B cell (primary cell): ENCODE measurements at regions of chr16 and their contacts with region 1.

Region 1: DNA sequence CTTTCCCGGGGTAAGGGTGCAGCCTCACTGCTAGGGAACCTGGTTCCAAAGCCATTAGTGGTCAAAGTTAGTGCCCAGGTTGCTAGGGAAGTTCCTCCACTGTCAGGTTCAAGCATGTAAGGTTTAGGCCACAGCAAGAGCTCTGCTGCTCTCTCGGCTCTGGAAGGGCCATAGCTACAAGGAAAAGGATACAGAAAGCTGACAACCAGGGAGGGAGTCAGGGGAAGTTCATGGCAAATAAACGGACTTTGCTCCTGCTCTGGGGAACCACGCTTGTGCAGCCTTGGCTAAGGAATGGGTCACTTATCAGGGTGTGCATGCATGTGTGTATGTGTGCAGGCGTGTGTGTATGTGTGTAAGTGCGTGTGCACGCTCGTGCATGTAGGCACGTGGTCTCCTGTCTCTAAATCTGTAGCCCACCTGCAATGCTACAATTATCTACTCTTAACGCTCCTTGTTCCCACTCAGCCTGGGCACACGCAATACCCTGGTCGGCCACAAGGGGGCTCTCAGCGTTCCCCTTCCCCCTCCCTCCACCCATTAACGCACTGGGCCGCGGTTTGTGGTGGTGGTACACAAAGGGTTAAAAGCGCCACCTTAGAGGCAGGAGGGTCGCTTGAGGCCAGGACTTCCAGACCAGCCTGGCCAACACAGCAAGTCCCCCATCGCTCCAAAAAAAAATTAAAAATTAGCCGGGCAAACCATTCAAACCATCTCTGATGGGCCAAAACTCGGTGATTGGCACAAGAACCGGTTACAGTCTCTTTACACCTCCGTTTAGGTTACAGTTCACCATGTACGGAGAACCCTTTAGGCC is 48.4 kb upstream of the KDM8 start:
- DNase-seq: peak; percentile 75
- ATAC-seq: peak; percentile 91
- H3K4me3 ChIP-seq: no peak overlapping the region
- H3K4me3 Mint-ChIP-seq: no peak overlapping the region
- H3K27ac ChIP-seq: no peak overlapping the region
- H3K27ac Mint-ChIP-seq: no peak overlapping the region
- H3K4me1 ChIP-seq: peaks cover 9 to 11% of the 10 kb centered on the region in 2 donors
- H3K4me1 Mint-ChIP-seq: peaks cover 13% of the 10 kb centered on the region
- H3K27me3 ChIP-seq: no peaks in the 10 kb centered on the region
- H3K27me3 Mint-ChIP-seq: no peaks in the 10 kb centered on the region
- CTCF ChIP-seq: peak; percentile 99

Region 2: DNA sequence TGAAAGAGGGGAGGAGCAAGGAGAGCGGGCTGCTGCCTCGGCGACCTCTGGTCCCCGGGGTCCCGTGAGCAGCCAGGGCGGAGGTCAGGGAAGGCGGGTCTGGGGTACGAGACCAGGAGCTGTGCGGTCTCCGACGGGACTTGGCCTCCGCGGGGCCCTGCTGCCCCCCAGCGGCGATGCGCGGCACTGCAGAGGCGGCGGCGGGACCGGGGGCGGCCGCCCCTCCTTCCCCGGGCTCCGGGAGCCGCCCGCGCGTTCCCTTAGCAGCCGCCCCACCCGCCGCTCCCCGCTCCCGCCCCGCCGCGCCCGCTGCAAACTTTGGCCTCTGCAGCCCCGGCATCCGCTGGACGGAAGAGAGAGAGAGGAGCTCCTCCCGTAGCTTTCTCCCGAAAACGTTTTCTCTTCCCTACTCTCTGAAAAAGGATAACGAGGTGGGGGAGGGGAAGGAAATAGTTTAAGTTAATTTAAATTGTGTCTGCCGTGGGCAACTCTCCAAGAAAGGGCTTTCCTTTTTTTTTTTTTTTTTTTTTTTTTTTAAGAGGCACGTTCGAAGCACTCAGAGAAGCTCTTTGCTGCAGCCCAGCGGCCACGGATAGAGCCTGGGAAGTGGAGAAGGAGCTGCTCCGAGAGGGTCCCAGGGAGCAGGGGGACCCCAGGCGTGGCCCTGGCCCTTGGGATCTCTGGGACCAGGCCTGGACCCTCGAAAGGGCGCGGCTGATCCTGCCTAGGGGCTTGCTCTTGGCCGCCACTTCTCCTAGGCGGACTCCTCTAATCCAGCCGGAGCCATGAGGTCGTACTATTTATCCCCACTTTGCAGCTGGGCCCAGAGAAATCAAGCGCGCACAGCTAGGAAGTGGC is 45.0 kb before region 1 on chr16:
- CTCF ChIA-PET with region 1: interaction called, 14 read pairs
- POLR2A ChIA-PET with region 1: no interaction called
- intact Hi-C with region 1: no loop called
- DNase-seq: peak; percentile 80
- ATAC-seq: peak; percentile 73
- H3K4me3 ChIP-seq: peak overlapping the region in 4 of 5 experiments; percentile 24 to 64 (median 45)
- H3K4me3 Mint-ChIP-seq: peak overlapping the region; percentile 75
- H3K27ac ChIP-seq: no peak overlapping the region
- H3K27ac Mint-ChIP-seq: no peak overlapping the region
- H3K4me1 ChIP-seq: peaks cover 36 to 51% of the 10 kb centered on the region in 2 donors
- H3K4me1 Mint-ChIP-seq: peaks cover 41% of the 10 kb centered on the region
- H3K27me3 ChIP-seq: no peaks in the 10 kb centered on the region
- H3K27me3 Mint-ChIP-seq: no peaks in the 10 kb centered on the region
- CTCF ChIP-seq: peak; percentile 99

Region 3: DNA sequence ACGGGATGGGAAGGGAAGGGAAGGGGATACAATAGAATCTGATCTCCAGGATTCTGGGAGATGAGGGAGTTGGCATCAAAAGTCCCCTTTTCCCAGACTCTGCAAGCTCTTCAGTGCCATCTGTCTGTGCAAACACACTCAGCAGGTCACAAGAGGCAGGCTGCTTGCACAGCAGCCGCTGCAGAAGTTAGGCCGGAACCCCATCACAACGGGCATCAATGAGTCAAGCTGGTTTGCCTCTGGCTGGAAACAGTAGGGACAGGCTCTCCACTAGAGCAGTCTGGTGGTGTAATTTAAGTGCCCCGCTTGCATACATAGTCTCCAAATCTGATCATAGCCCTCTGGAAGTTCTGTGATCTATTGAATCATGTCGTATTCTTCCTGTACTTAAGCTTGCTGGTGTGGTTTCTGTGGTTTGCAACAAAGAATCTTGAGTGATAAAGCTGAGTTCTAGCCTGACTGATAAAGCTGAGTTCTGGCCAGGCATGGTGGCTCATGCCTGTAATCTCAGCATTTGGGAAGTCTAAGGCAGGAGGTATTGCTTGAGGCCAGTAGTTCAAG is 14.7 kb after region 1 on chr16:
- CTCF ChIA-PET with region 1: interaction called, 13 read pairs
- POLR2A ChIA-PET with region 1: no interaction called
- intact Hi-C with region 1: no loop called
- DNase-seq: peak; percentile 32
- ATAC-seq: peak; percentile 37
- H3K4me3 ChIP-seq: no peak overlapping the region
- H3K4me3 Mint-ChIP-seq: no peak overlapping the region
- H3K27ac ChIP-seq: no peak overlapping the region
- H3K27ac Mint-ChIP-seq: peak overlapping the region; percentile 32
- H3K4me1 ChIP-seq: peaks cover 25 to 34% of the 10 kb centered on the region in 2 donors
- H3K4me1 Mint-ChIP-seq: peaks cover 31% of the 10 kb centered on the region
- H3K27me3 ChIP-seq: no peaks in the 10 kb centered on the region
- H3K27me3 Mint-ChIP-seq: no peaks in the 10 kb centered on the region
- CTCF ChIP-seq: no peak

Region 4: DNA sequence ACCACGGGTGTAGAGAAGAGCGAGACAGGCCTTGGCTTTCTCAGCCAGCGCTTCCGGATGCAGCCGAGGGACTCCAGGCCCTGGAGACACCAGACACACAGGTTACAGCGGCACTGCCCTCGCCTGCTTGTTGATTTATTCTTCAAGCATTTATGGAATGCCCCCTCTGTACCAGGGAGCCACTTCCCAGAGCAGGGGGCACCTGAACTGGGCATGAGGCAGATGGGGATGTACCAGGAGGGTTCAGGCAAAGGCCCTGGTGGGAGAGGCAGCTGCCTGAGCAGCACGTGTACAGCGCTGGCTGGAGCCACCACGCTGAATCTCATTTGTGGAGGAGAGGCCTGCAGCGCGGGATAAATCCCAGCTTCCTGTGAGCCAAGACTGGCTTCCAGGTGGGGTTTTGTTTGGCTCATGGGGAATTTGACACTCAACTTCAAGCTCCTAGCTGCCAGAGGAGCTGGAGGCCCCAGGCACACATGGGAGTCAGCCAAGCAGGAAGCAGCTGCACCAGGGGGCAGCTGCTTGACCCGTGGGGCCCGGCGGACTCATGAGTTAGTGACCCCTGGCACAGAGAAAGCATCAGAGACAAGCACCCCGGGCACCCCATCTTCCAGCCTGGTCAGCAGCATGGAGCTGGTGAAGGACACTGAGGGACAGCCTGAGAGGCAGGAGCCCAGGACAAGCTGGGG is 306.7 kb after region 1 on chr16:
- CTCF ChIA-PET with region 1: interaction called, 8 read pairs
- POLR2A ChIA-PET with region 1: no interaction called
- intact Hi-C with region 1: loop called (anchors 1 kb)
- DNase-seq: no peak
- ATAC-seq: no peak
- H3K4me3 ChIP-seq: no peak overlapping the region
- H3K4me3 Mint-ChIP-seq: no peak overlapping the region
- H3K27ac ChIP-seq: no peak overlapping the region
- H3K27ac Mint-ChIP-seq: no peak overlapping the region
- H3K4me1 ChIP-seq: peaks cover 5 to 8% of the 10 kb centered on the region in 2 donors
- H3K4me1 Mint-ChIP-seq: peaks cover 7% of the 10 kb centered on the region
- H3K27me3 ChIP-seq: no peaks in the 10 kb centered on the region
- H3K27me3 Mint-ChIP-seq: no peaks in the 10 kb centered on the region
- CTCF ChIP-seq: no peak